ENCODE measurements at regions of chr2 and their contacts with region 1.

Region 1: GRCh38 chr2:237427769-237428506 is 14.0 kb upstream of the COL6A3 start:
- DNase-seq: peak; percentile 49
- H3K4me3 Mint-ChIP-seq: peak overlapping the region; percentile 67
- H3K27ac Mint-ChIP-seq: peak overlapping the region; percentile 93
- H3K4me1 Mint-ChIP-seq: peaks cover 76% of the 10 kb centered on the region
- H3K27me3 Mint-ChIP-seq: peaks cover under 1% of the 10 kb centered on the region

Region 2: DNA sequence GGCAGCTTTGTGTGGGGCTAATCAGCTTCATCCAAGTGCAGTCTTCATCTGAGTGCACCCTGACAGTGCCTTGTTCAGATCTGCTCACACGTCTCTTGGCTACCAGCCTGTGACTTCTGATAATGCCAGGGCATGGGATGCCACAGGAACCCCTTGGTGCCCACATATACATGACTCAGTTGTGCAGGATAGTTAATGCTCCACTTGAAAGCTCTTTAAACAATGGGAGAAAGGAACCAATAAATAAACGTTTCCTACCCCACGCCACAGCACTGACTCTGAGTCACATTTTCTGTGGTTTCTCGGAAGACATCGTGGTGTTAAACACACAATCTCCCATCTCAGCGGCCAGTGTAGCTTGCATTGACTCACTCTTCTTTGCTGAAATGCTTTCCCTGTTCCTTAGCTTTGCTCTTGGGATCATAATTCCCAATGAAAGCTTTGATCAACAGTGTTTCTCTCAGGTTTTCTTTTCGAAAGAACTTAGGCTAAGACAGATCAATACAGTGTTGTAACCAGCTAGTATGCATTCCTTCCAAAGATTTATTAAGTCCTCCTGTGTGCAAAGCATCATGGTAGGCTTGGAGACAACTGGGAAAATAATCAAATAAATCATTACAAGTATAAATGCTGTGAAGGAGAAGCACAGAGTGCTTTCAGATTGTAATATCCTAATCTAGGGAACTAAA is 200.2 kb before region 1 on chr2:
- intact Hi-C with region 1: loop called (anchors 5 kb)
- DNase-seq: no peak
- H3K4me3 Mint-ChIP-seq: no peak overlapping the region
- H3K27ac Mint-ChIP-seq: peak overlapping the region; percentile 34
- H3K4me1 Mint-ChIP-seq: peaks cover 12% of the 10 kb centered on the region
- H3K27me3 Mint-ChIP-seq: peaks cover under 1% of the 10 kb centered on the region

Region 3: DNA sequence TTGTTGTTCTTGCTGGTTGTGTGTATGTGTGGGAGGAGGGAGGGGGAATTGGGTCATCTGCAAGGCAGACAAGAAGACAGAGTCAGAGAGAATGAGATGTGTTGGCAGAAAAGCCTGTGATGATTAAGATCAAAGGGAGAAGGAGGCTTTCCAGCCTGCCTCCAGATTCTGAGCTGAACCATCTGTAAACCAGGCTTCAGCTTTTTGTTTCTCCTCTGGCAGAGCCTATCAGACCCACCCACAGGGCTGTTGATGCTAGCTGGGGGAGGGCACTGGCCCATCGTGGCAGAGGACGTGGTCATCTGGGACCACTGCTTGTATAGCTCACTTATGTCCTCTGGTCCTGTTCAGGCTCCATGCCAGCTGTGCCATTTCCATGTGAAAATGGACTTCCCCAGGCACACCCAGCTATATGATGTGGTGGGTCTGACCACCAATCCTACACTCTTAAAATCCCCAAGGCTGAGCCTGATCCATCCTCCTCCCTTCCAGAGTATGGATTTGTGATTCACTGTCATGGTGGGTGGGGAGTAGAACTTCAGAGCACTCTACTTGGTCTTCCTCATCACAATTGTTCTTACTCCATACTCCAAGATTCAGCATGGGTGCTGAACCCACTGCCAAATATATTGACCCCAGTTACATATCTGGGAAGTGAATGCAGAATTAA is 13.8 kb after region 1 on chr2:
- intact Hi-C with region 1: loop called (anchors 1 kb)
- DNase-seq: no peak
- H3K4me3 Mint-ChIP-seq: peak overlapping the region; percentile 41
- H3K27ac Mint-ChIP-seq: peak overlapping the region; percentile 86
- H3K4me1 Mint-ChIP-seq: peaks cover 58% of the 10 kb centered on the region
- H3K27me3 Mint-ChIP-seq: no peaks in the 10 kb centered on the region

Region 4: GRCh38 chr2:237459741-237460174 is 31.8 kb after region 1 on chr2:
- intact Hi-C with region 1: loop called (anchors 2 kb)
- DNase-seq: no peak
- H3K4me3 Mint-ChIP-seq: no peak overlapping the region
- H3K27ac Mint-ChIP-seq: no peak overlapping the region
- H3K4me1 Mint-ChIP-seq: peaks cover 36% of the 10 kb centered on the region
- H3K27me3 Mint-ChIP-seq: peaks cover 2% of the 10 kb centered on the region

Region 5: DNA sequence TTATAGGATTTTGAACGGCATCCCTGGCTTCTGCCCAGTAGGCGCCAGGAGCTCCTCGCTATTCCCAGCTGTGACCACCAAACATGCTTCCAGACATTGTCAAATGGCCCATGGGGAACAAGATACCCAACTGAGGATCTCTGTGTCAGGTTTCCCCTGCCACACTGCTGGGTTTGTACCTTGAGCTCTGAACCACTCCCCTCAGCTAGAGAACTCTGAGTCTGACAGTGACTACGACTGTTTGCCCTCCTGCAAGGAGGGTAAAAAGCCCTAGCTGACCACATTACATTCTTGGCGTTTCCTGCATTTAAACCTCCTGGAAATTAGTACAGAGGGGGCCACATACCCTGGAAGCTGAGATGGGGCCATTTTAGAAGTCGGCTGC is 211.9 kb after region 1 on chr2:
- intact Hi-C with region 1: no loop called
- DNase-seq: no peak
- H3K4me3 Mint-ChIP-seq: no peak overlapping the region
- H3K27ac Mint-ChIP-seq: no peak overlapping the region
- H3K4me1 Mint-ChIP-seq: peaks cover 7% of the 10 kb centered on the region
- H3K27me3 Mint-ChIP-seq: peaks cover 7% of the 10 kb centered on the region